Activated B cell treated with CpG ODN at 0.5 μM for 24 hours (primary cell): ENCODE measurements at regions of chr12 and their contacts with region 1.

Region 1: GRCh38 chr12:97837401-97837800 is 374.8 kb downstream of the RMST start:
- DNase-seq: no peak
- ATAC-seq: no peak
- H3K4me3 Mint-ChIP-seq: no peak overlapping the region
- H3K27ac Mint-ChIP-seq: no peak overlapping the region
- H3K4me1 Mint-ChIP-seq: no peaks in the 10 kb centered on the region
- H3K27me3 Mint-ChIP-seq: no peaks in the 10 kb centered on the region
- CTCF ChIP-seq: no peak

Region 2: DNA sequence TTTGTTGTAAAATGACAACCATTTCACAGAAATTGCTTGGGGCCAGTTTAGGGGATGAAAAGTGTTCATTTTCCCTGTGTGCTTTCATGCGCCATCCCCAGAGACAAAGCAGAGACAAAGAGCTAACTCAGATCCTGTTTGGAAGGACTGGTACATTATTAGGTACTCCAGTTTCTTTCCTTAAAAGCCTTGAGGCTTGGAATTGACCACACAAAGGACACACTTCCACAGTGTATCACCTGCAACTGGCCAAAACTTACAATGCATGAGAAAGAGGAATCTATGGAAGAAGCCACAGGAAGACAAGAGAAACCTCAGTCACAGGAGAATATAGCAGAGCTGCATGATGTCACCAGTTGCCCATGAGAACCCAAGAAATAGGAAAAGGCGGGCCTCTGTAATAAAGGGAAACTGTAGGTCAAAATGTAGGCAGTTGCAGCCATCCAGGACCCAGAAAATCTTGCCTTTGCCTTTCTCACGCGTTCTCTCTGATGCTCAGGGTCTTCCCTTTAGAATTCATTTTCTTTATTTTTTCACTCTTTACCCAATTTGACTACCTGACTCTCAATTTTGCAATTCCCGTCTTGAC is 35.8 kb before region 1 on chr12:
- CTCF ChIA-PET with region 1: no interaction called
- POLR2A ChIA-PET with region 1: no interaction called
- intact Hi-C with region 1: loop called (anchors 1 kb)
- DNase-seq: no peak
- ATAC-seq: no peak
- H3K4me3 Mint-ChIP-seq: no peak overlapping the region
- H3K27ac Mint-ChIP-seq: no peak overlapping the region
- H3K4me1 Mint-ChIP-seq: no peaks in the 10 kb centered on the region
- H3K27me3 Mint-ChIP-seq: no peaks in the 10 kb centered on the region
- CTCF ChIP-seq: no peak

Region 3: GRCh38 chr12:97875064-97875463 is 37.7 kb after region 1 on chr12:
- CTCF ChIA-PET with region 1: no interaction called
- POLR2A ChIA-PET with region 1: no interaction called
- intact Hi-C with region 1: loop called (anchors 1 kb)
- DNase-seq: no peak
- ATAC-seq: no peak
- H3K4me3 Mint-ChIP-seq: no peak overlapping the region
- H3K27ac Mint-ChIP-seq: no peak overlapping the region
- H3K4me1 Mint-ChIP-seq: no peaks in the 10 kb centered on the region
- H3K27me3 Mint-ChIP-seq: no peaks in the 10 kb centered on the region
- CTCF ChIP-seq: no peak